OCI-LY7 (cell line): ENCODE measurements at regions of chr12 and their contacts with region 1.

Region 1: GRCh38 chr12:55789893-55790292 is 27.6 kb downstream of the SARNP start:
- DNase-seq: no peak
- H3K4me3 ChIP-seq: no peak overlapping the region
- H3K27ac ChIP-seq: no peak overlapping the region
- H3K4me1 ChIP-seq: no peaks in the 10 kb centered on the region
- CTCF ChIP-seq: no peak

Region 2: GRCh38 chr12:54526812-54527630 is 1262.9 kb before region 1 on chr12:
- CTCF ChIA-PET with region 1: no interaction called
- POLR2A ChIA-PET with region 1: no interaction called
- intact Hi-C with region 1: no loop called
- DNase-seq: peak; percentile 47
- H3K4me3 ChIP-seq: no peak overlapping the region
- H3K27ac ChIP-seq: no peak overlapping the region
- H3K4me1 ChIP-seq: no peaks in the 10 kb centered on the region
- CTCF ChIP-seq: peak; percentile 92

Region 3: DNA sequence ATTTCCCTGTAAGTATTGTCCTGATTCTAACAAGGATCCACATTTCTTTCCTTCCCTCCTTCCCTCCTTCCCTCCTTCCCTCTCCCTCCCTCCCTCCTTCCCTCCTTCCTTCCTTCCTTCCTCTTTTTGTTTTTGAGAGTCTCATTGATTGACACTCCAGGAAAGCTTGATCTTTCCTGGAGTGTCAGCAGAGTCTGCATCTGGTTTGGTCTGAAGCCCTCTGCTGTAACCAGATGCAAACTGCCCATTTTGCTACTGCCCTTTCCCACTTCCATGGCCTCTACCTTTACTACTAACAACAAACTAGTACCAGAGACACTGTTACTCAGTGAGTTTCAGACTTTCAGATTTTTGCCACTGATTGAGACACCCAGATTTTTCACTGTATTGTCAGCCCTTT is 404.0 kb before region 1 on chr12:
- CTCF ChIA-PET with region 1: no interaction called
- POLR2A ChIA-PET with region 1: no interaction called
- intact Hi-C with region 1: no loop called
- DNase-seq: no peak
- H3K4me3 ChIP-seq: no peak overlapping the region
- H3K27ac ChIP-seq: no peak overlapping the region
- H3K4me1 ChIP-seq: no peaks in the 10 kb centered on the region
- CTCF ChIP-seq: no peak

Region 4: DNA sequence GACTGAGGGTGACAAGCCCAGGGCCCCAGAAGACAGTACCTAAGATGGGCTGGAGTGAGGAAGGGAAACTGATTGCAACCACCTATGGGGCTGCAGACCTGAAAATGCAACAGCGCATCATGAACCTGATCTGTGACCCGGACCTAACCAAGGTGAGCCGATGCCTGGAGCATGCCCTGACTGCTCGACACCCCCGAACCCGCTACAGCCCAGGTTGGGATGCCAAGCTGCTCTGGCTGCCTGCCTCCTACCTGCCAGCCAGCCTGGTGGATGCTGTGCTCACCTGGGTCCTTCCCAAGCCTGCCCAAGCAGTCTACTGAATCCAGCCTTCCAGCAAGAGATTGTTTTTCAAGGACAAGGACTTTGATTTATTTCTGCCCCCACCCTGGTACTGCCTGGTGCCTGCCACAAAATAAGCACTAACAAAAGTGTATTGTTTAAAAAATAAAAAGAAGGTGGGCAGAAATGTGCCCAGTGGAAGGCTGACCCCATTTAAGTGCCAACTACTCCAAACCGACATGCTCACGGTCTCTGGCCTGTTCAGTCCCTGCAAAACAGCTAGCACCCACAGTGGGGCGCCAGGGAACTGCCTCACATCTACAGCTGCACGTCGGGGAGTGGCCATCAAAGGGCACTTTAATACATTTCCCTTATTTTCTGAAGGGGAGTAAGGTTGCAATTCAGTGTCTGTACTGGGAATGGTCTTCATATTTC is 65.5 kb before region 1 on chr12:
- CTCF ChIA-PET with region 1: no interaction called
- POLR2A ChIA-PET with region 1: no interaction called
- intact Hi-C with region 1: no loop called
- DNase-seq: peak; percentile 78
- H3K4me3 ChIP-seq: no peak overlapping the region
- H3K27ac ChIP-seq: no peak overlapping the region
- H3K4me1 ChIP-seq: peaks cover 16% of the 10 kb centered on the region
- CTCF ChIP-seq: peak; percentile 88

Region 5: DNA sequence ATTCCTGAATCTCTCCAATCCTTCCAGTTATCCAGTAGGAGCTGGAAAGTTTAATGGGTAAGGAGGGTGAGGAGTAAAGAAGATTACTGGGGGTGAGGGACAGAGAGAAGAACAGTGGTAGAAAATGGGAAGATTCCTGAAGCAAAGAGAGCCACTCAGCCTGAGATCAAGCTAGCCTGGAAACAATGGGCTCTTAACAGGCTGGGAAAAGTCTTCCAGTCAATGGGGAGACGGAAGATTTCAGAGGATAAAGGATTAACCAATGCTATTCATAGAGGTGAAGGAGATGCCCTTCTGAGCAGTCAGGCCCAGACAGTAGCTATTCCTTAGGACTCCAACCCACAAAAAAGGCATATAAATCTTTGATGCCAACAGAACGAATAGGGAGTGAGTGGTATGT is 32.2 kb before region 1 on chr12:
- CTCF ChIA-PET with region 1: no interaction called
- POLR2A ChIA-PET with region 1: interaction called, 5 read pairs
- intact Hi-C with region 1: loop called (anchors 5 kb)
- DNase-seq: no peak
- H3K4me3 ChIP-seq: no peak overlapping the region
- H3K27ac ChIP-seq: no peak overlapping the region
- H3K4me1 ChIP-seq: no peaks in the 10 kb centered on the region
- CTCF ChIP-seq: no peak